ENCODE measurements at regions of chr21 and their contacts with region 1.

Region 1: DNA sequence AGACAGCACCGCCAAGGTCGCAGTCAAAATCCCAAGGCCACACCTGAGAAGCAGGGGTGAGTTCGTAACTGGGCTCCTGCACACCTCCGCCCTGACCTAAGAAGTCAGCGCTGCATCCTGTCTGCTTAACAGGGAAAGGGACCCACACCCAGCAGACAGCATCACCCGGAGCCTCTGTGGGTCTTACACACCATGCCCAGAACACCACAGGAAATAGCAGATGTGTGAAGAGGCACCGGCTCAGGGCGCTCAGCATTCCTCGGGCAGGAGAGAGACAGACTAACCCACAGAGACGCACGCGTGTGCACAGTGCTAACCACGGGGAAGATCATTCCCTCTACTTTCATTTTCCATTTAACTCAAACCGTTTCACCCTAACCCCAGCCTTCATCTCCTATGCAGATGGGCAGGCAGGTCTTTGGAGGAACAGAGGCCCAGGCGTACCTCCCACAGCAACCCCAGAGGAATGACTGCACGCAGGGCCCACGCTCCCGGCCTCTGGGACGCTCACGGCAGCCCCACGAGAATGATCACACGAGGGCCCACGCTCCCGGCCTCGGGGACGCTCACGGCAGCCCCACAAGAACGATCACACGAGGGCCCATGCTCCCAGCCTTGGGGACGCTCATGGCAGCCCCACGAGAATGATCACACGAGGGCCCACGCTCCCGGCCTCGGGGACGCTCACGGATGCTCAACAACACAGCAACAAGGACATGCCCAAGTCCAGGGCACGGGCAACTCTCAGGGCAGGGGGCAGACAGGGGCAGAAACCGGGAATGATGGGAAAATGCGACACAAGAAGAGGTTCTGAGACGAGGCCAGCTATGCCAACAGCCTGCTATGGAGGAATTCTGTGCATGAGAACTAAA is 20.9 kb downstream of the POFUT2 start:
- DNase-seq: peak; percentile 31 to 92 (median 55)
- ATAC-seq: peak; percentile 91
- H3K4me3 ChIP-seq: peak overlapping the region in 1 of 2 experiments; percentile 12
- H3K4me3 Mint-ChIP-seq: peak overlapping the region; percentile 22
- H3K27ac ChIP-seq: peak overlapping the region; percentile 45 to 58
- H3K27ac Mint-ChIP-seq: peak overlapping the region; percentile 90
- H3K4me1 ChIP-seq: peaks cover 18% of the 10 kb centered on the region
- H3K4me1 Mint-ChIP-seq: peaks cover 16% of the 10 kb centered on the region
- H3K27me3 ChIP-seq: no peaks in the 10 kb centered on the region
- H3K27me3 Mint-ChIP-seq: no peaks in the 10 kb centered on the region
- CTCF ChIP-seq: no peak

Region 2: DNA sequence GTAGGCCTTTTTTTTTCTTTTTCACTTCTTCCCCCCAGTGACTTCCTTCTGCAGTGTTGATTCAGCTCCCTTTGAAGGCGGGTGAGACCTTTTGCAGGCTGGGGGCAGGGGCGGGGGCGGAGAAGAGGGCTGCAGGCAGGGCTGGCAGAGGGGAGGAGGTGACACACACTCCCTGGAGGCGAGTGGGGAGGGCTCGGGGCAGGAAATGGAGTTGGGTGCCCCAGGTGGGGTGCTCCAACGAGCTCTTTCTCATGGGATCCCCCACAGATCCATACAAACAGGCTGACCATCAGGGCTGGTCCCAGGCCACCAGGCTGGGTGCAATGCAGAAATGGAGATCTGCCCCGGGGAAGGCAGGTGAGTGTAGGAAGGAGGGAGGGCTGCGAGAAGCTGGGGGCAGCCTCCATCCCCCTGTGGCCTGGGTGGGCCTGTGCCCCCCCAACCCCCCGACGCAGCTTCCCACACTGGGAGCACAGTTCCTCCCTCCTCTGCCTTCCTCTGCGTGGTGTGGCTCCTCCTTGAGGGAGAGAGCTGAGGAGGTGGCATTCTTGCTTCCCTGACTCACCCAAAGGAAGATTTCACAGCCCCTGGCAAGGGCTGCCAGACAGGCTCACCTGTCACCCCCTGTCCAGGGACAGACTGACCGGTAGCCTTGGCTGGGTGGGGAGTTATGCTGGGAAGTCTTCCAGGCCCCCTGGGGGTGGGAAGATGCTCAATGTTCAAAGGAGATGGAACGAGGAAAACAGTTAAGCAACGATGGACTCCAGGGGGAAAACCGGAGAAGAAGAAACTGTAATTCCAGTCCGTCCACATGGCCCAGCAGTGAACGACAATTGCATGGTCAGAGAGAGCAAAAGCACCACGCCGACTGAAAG is 338.9 kb before region 1 on chr21:
- CTCF ChIA-PET with region 1: no interaction called
- POLR2A ChIA-PET with region 1: no interaction called
- intact Hi-C with region 1: no loop called
- DNase-seq: peak; percentile 59 to 96 (median 90)
- ATAC-seq: peak; percentile 78
- H3K4me3 ChIP-seq: peak overlapping the region; percentile 68 to 92
- H3K4me3 Mint-ChIP-seq: peak overlapping the region; percentile 91
- H3K27ac ChIP-seq: peak overlapping the region; percentile 75 to 79
- H3K27ac Mint-ChIP-seq: peak overlapping the region; percentile 96
- H3K4me1 ChIP-seq: peaks cover 82% of the 10 kb centered on the region
- H3K4me1 Mint-ChIP-seq: peaks cover 76% of the 10 kb centered on the region
- H3K27me3 ChIP-seq: no peaks in the 10 kb centered on the region
- H3K27me3 Mint-ChIP-seq: no peaks in the 10 kb centered on the region
- CTCF ChIP-seq: no peak

Region 3: GRCh38 chr21:45228171-45228641 is 38.5 kb before region 1 on chr21:
- CTCF ChIA-PET with region 1: no interaction called
- POLR2A ChIA-PET with region 1: no interaction called
- intact Hi-C with region 1: loop called (anchors 1 kb)
- DNase-seq: peak; percentile 53 to 95 (median 73)
- ATAC-seq: peak; percentile 65
- H3K4me3 ChIP-seq: no peak overlapping the region
- H3K4me3 Mint-ChIP-seq: no peak overlapping the region
- H3K27ac ChIP-seq: peak overlapping the region in 1 of 2 experiments; percentile 48
- H3K27ac Mint-ChIP-seq: peak overlapping the region; percentile 85
- H3K4me1 ChIP-seq: peaks cover 25% of the 10 kb centered on the region
- H3K4me1 Mint-ChIP-seq: peaks cover 36% of the 10 kb centered on the region
- H3K27me3 ChIP-seq: peaks cover 0 to 2% of the 10 kb centered on the region in 2 experiments
- H3K27me3 Mint-ChIP-seq: no peaks in the 10 kb centered on the region
- CTCF ChIP-seq: no peak

Region 4: DNA sequence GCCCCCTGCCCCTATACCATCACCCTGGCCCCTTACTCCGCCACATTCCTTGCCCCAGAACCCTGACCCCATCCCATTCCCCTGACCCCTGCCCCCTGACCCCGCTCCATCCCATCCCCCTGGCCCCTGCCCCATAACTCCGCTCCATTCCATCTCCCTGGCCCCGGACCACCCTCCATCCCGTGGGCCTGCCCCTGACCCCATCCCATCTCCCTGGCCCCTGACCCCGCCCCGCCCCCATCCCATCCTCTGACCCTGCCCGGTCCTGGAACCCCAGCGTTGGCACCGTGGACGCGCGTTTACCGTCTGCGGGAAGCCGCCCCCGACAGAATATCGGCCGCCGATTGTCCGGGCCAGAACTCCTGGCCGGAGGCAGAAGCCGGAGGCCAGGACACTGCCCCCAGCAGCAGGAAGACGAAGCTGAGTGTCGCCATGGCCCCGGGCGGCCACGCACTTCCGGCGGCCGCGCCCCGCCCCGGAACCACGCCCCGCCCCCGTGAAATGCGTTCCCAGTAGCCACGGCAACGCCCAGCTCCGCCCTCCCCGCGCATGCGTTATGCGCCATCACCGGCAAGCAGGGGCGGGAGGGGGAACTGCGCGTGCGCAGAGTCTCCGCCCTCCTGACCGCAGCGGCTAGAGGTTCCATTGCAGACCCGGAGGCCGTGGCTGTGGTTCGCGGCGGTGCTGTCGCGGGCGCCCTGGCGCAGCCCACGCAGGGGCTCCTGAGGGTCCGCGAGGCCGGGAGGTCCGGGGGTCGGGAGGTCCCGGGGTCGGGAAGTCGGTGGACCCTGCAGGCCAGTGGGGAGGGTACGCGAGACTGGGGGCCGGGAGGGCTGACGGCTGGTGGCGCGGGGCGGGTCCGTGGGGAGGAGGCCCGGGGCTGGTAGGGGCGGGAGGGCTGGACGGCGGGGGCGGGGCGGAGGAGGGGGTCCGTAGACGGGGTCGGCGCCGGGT is 21.0 kb after region 1 on chr21 and contains the start of gene POFUT2:
- CTCF ChIA-PET with region 1: no interaction called
- POLR2A ChIA-PET with region 1: no interaction called
- intact Hi-C with region 1: no loop called
- DNase-seq: peak; percentile 94 to 100 (median 99)
- ATAC-seq: peak; percentile 85
- H3K4me3 ChIP-seq: peak within 1 kb of the TSS; percentile 70 to 83
- H3K4me3 Mint-ChIP-seq: peak within 1 kb of the TSS; percentile 85
- H3K27ac ChIP-seq: peak within 1 kb of the TSS; percentile 80 to 83
- H3K27ac Mint-ChIP-seq: peak within 1 kb of the TSS; percentile 81
- H3K4me1 ChIP-seq: peaks cover 18% of the 10 kb centered on the region
- H3K4me1 Mint-ChIP-seq: peaks cover 26% of the 10 kb centered on the region
- H3K27me3 ChIP-seq: no peaks in the 10 kb centered on the region
- H3K27me3 Mint-ChIP-seq: no peaks in the 10 kb centered on the region
- CTCF ChIP-seq: no peak
- total RNA-seq, gene POFUT2: 54.7 to 56.7 TPM

Measured in CD8-positive, alpha-beta T cell (primary cell).